Activated CD4-positive, alpha-beta memory T cell treated with anti-CD3 and anti-CD28 coated beads for 36 hours (primary cell): ENCODE measurements at regions of chrX and their contacts with region 1.

Region 1: DNA sequence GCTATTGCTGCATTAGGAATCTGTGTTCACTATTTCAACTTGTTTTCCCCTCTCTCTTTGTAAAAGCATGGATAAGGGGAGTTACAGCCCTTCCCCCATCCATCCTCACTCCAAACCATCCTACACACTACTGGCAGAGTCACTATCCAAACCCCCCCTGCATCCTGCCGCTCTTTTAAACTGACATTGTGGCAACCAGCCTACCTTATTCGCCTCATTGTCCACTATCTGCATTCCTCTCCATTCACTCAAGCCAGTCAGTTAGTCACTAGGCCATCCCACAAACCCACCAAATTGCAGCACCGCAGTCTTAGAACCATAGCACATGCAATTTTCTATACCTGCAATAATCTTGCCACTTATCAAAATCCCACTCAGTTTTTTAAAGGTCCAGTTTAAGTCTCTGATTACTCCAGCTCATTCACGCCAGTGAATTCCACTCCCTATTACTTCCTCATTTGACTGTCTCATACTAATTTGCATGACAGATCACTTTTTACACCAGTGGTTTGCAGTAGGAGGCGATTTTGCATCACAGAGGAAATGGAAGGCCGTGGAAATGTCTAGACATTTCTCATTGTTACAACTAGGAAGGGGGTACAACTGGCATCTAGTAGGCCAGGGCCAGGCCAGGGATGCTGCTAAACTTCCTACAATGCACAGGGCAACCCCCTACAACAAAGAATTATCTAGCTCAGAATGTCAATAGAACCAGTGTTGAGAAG is 181.8 kb downstream of the HS6ST2 start:
- DNase-seq: peak; percentile 8
- H3K4me3 Mint-ChIP-seq: no peak overlapping the region
- H3K27ac Mint-ChIP-seq: no peak overlapping the region
- H3K4me1 Mint-ChIP-seq: peaks cover 24% of the 10 kb centered on the region
- H3K27me3 Mint-ChIP-seq: no peaks in the 10 kb centered on the region

Region 2: DNA sequence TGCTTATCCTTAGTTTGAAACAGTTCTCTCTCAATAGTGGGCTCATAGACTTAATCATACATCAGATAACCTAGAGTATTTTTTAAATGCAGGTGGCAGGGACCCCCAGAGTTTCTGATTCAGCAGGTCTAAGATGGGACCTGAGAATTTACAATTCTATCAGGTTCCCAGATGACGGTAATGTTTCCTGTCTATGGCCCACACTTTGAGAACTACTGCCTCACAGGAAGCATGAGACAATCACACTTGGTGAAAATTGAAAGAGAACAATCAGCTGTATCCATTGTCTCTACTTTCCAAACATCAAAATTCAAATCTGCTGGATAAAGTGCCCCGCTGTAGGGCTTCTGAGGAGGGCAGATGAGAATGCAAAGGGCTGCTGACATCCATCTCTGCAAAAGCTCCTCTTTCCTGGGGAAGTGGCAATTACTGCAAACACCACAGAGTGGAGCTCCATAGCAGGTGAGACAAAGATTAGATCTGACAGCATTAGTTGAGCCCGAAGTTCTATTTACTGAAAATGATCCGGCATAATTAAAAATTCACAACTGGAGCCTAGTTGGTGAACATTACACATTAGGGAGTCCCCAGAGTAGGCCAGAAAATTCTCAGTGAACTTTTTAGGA is 100.0 kb before region 1 on chrX:
- CTCF ChIA-PET with region 1: no interaction called
- POLR2A ChIA-PET with region 1: interaction called, 5 read pairs
- intact Hi-C with region 1: loop called (anchors 1 kb)
- DNase-seq: no peak
- H3K4me3 Mint-ChIP-seq: no peak overlapping the region
- H3K27ac Mint-ChIP-seq: no peak overlapping the region
- H3K4me1 Mint-ChIP-seq: peaks cover 8% of the 10 kb centered on the region
- H3K27me3 Mint-ChIP-seq: no peaks in the 10 kb centered on the region

Region 3: DNA sequence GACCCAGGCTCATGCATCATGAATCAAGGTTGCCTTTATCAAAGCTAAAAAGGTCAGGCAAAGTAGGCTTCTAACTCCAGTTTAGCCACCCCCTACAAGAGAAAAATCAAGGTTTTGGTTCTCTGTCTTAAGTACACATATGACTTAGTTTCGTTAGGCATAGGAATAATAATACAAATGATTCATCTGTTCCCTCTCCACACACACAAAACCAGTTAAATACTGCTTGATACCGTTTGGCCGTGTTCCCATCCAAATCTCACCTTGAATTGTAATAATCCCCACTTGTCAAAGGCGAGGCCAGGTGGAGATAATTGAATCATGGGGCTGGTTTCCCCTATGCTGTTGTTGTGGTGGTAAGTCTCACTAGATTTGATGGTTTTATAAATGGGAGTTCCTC is 44.4 kb before region 1 on chrX:
- CTCF ChIA-PET with region 1: interaction called, 3 read pairs
- POLR2A ChIA-PET with region 1: interaction called, 10 read pairs
- intact Hi-C with region 1: loop called (anchors 1 kb)
- DNase-seq: peak; percentile 9
- H3K4me3 Mint-ChIP-seq: no peak overlapping the region
- H3K27ac Mint-ChIP-seq: no peak overlapping the region
- H3K4me1 Mint-ChIP-seq: peaks cover 12% of the 10 kb centered on the region
- H3K27me3 Mint-ChIP-seq: no peaks in the 10 kb centered on the region